PC-9 (cell line): ENCODE measurements at regions of chr3 and their contacts with region 1.

Region 1: GRCh38 chr3:31389939-31390338 is 142.8 kb upstream of the STT3B start:
- DNase-seq: no peak
- H3K4me3 ChIP-seq: no peak overlapping the region
- H3K27ac ChIP-seq: no peak overlapping the region
- H3K4me1 ChIP-seq: no peaks in the 10 kb centered on the region
- H3K27me3 ChIP-seq: no peaks in the 10 kb centered on the region
- CTCF ChIP-seq: no peak

Region 2: DNA sequence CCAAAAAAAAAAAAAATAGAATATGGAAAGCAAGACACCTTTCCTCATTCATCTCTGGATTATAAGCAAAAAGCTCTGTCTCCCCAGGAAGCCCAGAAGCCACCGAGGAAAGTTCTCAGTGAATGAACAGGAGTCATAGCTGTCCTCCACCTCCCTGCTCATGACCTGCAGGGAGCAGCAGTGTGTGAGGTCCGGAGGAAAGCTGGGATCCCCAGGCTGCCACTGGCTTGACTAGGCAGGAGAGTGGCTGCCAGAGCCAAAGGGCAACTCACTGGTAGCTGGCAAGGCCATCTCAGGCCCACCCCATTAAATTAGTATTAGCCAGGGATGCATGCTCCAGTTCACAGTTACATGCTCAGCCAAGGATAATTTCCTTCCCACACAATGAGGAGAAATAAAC is 48.8 kb before region 1 on chr3:
- CTCF ChIA-PET with region 1: no interaction called
- POLR2A ChIA-PET with region 1: no interaction called
- intact Hi-C with region 1: no loop called
- DNase-seq: no peak
- H3K4me3 ChIP-seq: no peak overlapping the region
- H3K27ac ChIP-seq: no peak overlapping the region
- H3K4me1 ChIP-seq: no peaks in the 10 kb centered on the region
- H3K27me3 ChIP-seq: no peaks in the 10 kb centered on the region
- CTCF ChIP-seq: no peak

Region 3: GRCh38 chr3:31405515-31405914 is 15.6 kb after region 1 on chr3:
- CTCF ChIA-PET with region 1: no interaction called
- POLR2A ChIA-PET with region 1: interaction called, 13 read pairs
- intact Hi-C with region 1: no loop called
- DNase-seq: no peak
- H3K4me3 ChIP-seq: no peak overlapping the region
- H3K27ac ChIP-seq: no peak overlapping the region
- H3K4me1 ChIP-seq: no peaks in the 10 kb centered on the region
- H3K27me3 ChIP-seq: no peaks in the 10 kb centered on the region
- CTCF ChIP-seq: no peak